ENCODE measurements at regions of chr13 and their contacts with region 1.

Region 1: GRCh38 chr13:73708393-73708985 is 425.7 kb downstream of the KLF12 start:
- DNase-seq: peak; percentile 73
- H3K4me3 Mint-ChIP-seq: no peak overlapping the region
- H3K27ac Mint-ChIP-seq: no peak overlapping the region
- H3K4me1 Mint-ChIP-seq: peaks cover 15% of the 10 kb centered on the region
- H3K27me3 Mint-ChIP-seq: no peaks in the 10 kb centered on the region

Region 2: GRCh38 chr13:72643311-72643989 is 1065.0 kb before region 1 on chr13:
- CTCF ChIA-PET with region 1: no interaction called
- intact Hi-C with region 1: loop called (anchors 1 kb)
- DNase-seq: peak; percentile 77
- H3K4me3 Mint-ChIP-seq: no peak overlapping the region
- H3K27ac Mint-ChIP-seq: no peak overlapping the region
- H3K4me1 Mint-ChIP-seq: no peaks in the 10 kb centered on the region
- H3K27me3 Mint-ChIP-seq: peaks cover 9% of the 10 kb centered on the region

Region 3: DNA sequence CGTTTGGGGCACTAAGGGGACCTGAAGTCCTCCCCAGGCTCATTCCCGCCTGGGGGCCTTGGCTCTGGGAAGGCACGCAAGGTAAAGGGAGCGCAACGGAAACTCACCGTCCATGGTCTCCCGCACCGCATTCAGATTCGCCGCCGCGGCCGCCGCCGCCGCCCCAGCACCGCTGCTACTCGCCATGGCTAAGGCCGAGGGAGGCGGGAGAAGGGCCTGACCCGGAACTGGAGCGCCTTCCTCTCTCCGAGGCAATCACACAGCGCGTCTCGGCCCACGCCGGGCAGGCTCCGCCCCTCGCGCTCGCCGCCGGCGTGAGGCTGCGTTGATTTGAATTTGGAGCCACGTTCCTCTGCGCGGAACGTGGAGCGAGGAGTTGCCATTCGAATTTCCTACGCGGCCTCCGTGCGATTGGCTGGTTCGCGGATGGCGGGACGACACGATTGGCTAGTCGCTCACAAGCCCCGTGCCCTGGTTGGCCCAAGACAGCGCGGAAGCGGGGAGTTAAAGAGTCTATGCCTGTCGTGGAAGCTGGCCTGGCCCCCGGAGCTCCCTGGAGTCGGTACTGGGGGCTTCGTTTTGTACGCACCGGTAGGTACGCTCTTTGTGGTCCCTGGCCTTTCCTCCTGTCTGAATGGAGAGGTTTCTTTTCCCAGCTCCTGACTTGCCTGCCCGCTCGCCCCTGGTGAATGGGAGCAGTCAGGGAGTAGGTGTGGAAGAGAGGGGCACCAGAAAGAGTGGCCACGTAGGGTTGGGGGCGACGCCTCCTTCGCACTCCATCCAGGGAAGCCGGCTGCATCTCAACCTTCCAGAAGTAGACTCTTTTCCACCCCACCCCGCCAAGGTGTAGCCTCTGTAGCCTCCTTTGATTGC is 980.8 kb before region 1 on chr13 and contains the starts of genes BORA and MZT1:
- CTCF ChIA-PET with region 1: no interaction called
- intact Hi-C with region 1: loop called (anchors 2 kb)
- DNase-seq: peak; percentile 97
- H3K4me3 Mint-ChIP-seq: peak within 1 kb of the TSS; percentile 90
- H3K27ac Mint-ChIP-seq: peak within 1 kb of the TSS; percentile 81
- H3K4me1 Mint-ChIP-seq: peaks cover 41% of the 10 kb centered on the region
- H3K27me3 Mint-ChIP-seq: no peaks in the 10 kb centered on the region
- total RNA-seq, gene BORA: 17.3 to 19.5 TPM
- total RNA-seq, gene MZT1: 32.4 to 32.9 TPM

Region 4: DNA sequence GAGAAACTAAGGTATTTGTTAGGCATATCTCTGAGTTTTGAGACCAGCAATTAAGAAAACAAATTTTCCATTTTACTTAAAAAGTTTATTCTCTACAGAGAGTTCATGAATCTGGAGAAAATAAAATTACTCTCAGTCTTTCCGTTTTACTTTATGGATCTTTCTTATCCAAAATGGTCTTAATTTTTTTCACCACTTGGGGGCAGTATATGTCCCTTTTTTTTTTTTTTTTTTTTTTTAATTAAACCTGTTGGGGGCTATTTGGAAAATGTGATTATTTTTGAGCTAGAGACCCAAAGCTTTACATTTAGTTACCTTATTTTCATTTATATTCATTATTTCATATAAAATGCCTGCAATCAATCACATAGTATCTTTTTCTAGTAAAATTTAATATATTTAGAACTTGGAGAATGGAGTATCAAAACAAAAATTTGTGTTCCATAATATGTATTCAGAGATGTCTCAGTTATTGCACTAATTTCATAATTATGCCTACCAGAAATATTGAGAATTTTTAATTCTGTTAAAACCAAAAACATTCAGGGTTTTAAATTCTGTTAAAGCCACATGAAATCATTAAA is 899.5 kb before region 1 on chr13:
- CTCF ChIA-PET with region 1: no interaction called
- intact Hi-C with region 1: loop called (anchors 1 kb)
- DNase-seq: no peak
- H3K4me3 Mint-ChIP-seq: no peak overlapping the region
- H3K27ac Mint-ChIP-seq: no peak overlapping the region
- H3K4me1 Mint-ChIP-seq: peaks cover 4% of the 10 kb centered on the region
- H3K27me3 Mint-ChIP-seq: no peaks in the 10 kb centered on the region

Region 5: GRCh38 chr13:72839831-72840426 is 868.6 kb before region 1 on chr13:
- CTCF ChIA-PET with region 1: no interaction called
- intact Hi-C with region 1: loop called (anchors 1 kb)
- DNase-seq: peak; percentile 63
- H3K4me3 Mint-ChIP-seq: no peak overlapping the region
- H3K27ac Mint-ChIP-seq: no peak overlapping the region
- H3K4me1 Mint-ChIP-seq: no peaks in the 10 kb centered on the region
- H3K27me3 Mint-ChIP-seq: no peaks in the 10 kb centered on the region

Region 6: DNA sequence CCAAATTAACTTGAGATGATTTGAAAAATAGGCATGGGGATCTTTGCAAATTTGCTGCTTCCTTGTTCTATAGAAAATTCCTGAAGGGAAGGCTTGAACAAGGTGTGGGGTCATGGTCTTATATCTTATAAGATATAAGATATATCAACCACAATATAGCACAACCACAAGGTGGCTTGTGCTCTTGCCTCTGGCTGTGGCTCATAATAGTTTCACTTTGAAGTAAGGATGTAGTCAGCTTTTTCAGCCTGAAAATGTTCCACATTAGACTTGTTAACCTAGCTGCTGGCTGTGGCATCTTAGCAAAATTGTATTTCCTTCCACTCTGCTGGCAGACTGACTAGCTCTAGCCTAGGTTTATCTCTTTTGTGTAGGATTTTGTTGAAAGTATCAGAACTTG is 479.9 kb before region 1 on chr13:
- CTCF ChIA-PET with region 1: interaction called, 4 read pairs
- intact Hi-C with region 1: loop called (anchors 1 kb)
- DNase-seq: peak; percentile 37
- H3K4me3 Mint-ChIP-seq: no peak overlapping the region
- H3K27ac Mint-ChIP-seq: peak overlapping the region; percentile 36
- H3K4me1 Mint-ChIP-seq: peaks cover 42% of the 10 kb centered on the region
- H3K27me3 Mint-ChIP-seq: no peaks in the 10 kb centered on the region

Region 7: GRCh38 chr13:73286976-73287674 is 421.4 kb before region 1 on chr13:
- CTCF ChIA-PET with region 1: no interaction called
- intact Hi-C with region 1: loop called (anchors 5 kb)
- DNase-seq: no peak
- H3K4me3 Mint-ChIP-seq: no peak overlapping the region
- H3K27ac Mint-ChIP-seq: no peak overlapping the region
- H3K4me1 Mint-ChIP-seq: no peaks in the 10 kb centered on the region
- H3K27me3 Mint-ChIP-seq: no peaks in the 10 kb centered on the region

Measured in activated naive CD4-positive, alpha-beta T cell treated with anti-CD3 and anti-CD28 coated beads for 36 hours (primary cell).